ENCODE measurements at regions of chr1 and their contacts with region 1.

Region 1: DNA sequence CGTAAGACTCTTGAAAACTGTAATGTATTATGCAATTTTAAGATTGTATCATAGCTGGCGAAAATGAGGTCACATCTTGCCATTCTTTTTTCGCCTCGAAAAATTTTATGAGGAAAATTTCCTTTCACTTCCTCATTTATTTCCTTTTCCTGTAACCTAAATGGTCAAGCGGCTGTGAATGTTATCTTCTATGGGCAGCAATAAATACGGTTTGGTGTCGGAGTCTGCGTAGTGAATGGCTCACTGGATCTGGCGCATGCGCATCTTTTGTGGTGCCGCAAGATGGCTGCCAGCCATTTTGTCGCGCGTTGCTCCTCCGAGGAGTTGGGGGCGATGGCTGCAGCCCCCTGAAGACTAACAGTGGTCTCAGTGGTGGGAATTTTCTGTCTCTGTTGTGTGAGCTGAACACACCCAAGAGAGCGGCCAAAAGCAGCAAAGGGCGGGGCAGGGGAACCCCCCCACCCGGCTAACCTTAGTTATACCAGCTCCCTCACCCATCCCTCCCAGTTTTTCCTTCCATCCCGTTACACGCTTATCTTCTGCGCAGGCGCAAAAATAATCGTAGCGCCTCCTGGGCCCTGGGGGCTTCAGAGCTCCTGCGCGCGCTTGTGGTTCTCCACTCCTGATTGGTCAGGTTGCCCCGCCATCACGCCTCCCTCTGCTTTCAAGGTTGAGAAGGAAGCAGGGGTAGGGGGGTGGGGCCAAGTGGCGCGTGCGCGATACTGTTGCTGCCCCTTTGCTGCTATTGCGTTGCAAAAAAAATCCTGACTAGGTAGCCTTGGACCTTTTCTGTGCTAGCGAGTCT is at the start of gene RPRD2:
- DNase-seq: peak; percentile 100
- H3K4me3 ChIP-seq: peak within 1 kb of the TSS; percentile 62 to 80 (median 70)
- H3K27ac ChIP-seq: peak within 1 kb of the TSS; percentile 90 to 98 (median 97)
- H3K4me1 ChIP-seq: peaks cover 0 to 30% (median 15%) of the 10 kb centered on the region in 4 donors
- H3K27me3 ChIP-seq: no peaks in the 10 kb centered on the region
- CTCF ChIP-seq: no peak
- EP300 ChIP-seq: peak in 2 of 4 donors; percentile 32 to 40
- POLR2A ChIP-seq: peak; percentile 57 to 70
- total RNA-seq, gene RPRD2: 16.2 to 26.7 (median 21.2) TPM

Region 2: DNA sequence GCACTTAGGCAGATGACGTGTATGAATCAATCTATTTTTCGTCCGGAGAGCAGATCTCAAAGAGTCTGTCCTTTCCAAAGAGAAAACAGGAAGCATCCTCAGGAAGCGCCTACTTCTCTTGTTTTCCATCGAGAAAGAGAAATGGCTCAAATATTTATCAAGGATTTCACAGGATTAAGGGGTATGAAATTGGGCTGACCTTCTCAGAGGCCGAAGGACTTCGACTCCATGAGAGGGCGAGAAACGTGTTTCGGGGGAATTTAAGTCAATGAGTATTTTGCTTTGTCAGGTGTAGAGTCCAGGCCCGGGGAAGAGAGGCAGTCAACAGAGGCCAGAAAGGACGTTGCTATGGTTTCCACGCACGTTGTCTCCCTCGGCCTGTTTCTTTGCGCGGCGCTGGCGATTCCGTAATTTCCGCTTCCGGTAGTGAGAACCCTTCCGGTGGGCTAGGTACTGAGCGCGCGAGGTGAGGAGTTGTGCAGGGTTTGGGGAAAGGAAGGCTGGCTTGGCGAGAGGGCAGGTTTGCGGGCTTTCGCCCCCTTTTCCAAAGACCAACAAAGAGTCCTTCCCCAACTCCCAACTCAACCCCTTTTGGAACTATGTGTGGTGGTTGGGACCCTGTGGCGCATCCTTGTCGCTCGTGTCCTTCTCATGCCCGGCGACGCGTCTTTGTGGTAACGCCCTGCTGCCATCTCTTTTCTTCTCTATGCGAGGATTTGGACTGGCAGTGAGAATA is 70.0 kb before region 1 on chr1 and contains the start of gene MRPS21:
- intact Hi-C with region 1: loop called (anchors 1 kb)
- DNase-seq: peak; percentile 96
- H3K4me3 ChIP-seq: peak within 1 kb of the TSS; percentile 52 to 72 (median 71)
- H3K27ac ChIP-seq: peak within 1 kb of the TSS; percentile 79 to 84 (median 82)
- H3K4me1 ChIP-seq: peaks cover 0 to 16% (median 10%) of the 10 kb centered on the region in 4 donors
- H3K27me3 ChIP-seq: no peaks in the 10 kb centered on the region
- CTCF ChIP-seq: no peak
- EP300 ChIP-seq: peak in 1 of 4 donors; percentile 39
- POLR2A ChIP-seq: peak; percentile 68
- total RNA-seq, gene MRPS21: 36.8 to 68.3 (median 58.4) TPM

Region 3: DNA sequence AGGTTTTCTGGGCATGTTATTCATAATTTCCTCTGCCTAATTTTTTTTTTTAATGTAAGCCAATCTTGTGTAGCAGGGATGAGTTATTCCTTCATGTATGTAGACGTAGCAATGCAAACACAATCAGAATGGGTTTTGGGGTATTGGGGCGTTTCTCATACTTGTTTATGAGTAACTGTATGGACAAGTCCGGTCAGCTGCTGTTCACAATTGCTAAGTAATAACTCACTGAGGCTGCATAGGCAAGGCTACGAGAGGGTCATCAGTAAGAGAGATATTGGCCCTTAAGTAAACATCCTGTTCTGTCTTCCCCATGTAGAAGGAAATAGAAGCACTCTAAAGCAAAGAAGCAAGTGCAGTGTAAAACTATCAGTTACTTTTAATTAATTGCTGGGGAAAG is 114.1 kb after region 1 on chr1:
- intact Hi-C with region 1: no loop called
- DNase-seq: no peak
- H3K4me3 ChIP-seq: no peak overlapping the region
- H3K27ac ChIP-seq: no peak overlapping the region
- H3K4me1 ChIP-seq: peaks cover 0 to 4% (median 0%) of the 10 kb centered on the region in 4 donors
- H3K27me3 ChIP-seq: no peaks in the 10 kb centered on the region
- CTCF ChIP-seq: no peak
- EP300 ChIP-seq: no peak
- POLR2A ChIP-seq: no peak

Measured in sigmoid colon (tissue), 7 donors.